ENCODE measurements at regions of chr14 and their contacts with region 1.

Region 1: DNA sequence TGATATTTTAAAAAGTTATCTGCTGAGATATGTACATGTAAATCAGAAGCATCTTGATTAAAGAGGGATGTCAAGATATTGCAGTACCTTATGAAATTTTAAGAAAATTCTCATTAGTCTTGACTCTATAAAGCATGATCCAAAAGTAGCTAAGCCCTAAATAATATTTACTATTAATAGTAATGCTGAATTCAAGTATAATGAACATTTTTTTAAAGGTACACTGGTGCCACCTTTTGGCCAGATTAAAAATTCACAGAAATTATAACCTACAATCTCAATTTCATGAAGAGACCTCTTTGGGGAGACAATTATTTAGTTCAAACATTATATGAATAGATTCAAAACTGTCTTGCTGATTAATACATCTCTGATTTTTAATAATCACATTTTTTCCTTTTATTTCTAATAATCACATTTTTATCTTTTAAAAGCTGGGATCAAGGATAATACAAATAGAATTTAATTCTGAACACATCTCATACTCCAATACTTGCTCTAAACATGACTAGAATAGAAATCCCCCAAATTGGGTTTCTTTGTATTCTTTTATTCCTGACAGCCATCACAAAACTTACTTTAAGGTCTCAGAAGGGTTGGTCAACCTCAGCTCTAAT is 13.4 kb downstream of the AKAP5 start:
- DNase-seq: no peak
- H3K4me3 ChIP-seq: no peak overlapping the region
- H3K27ac ChIP-seq: no peak overlapping the region
- H3K4me1 ChIP-seq: no peaks in the 10 kb centered on the region
- H3K27me3 ChIP-seq: no peaks in the 10 kb centered on the region
- CTCF ChIP-seq: no peak

Region 2: GRCh38 chr14:64349741-64350490 is 128.8 kb before region 1 on chr14:
- intact Hi-C with region 1: loop called (anchors 5 kb)
- DNase-seq: no peak
- H3K4me3 ChIP-seq: no peak overlapping the region
- H3K27ac ChIP-seq: no peak overlapping the region
- H3K4me1 ChIP-seq: no peaks in the 10 kb centered on the region
- H3K27me3 ChIP-seq: no peaks in the 10 kb centered on the region
- CTCF ChIP-seq: no peak

Region 3: DNA sequence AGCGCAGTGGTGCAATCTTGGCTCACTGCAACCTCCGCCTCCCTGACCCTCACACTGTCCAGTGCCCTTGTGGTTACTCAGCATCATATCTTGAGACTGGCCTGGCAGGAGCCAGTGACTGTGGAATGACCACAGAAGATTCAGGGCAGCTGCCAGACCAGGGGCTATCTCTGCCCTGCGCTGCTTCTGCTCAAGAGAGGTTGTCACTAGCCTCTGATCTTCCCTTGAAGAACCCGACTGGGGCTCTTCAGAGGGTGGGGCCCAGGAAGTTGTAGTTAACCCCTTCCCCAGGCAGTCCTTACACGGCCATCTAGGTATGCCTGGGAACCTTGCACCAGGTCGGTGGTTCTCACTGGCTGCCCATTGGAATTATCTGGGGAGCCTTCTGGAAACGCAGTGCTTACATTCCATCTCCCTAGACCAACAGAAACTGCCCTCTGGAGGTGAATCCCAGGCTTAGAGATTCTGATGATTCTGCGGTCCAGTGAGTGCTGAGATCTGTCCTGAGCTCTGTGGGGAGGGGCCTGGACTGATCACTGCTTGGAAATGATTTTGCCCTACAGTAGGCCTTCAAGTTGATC is 266.9 kb after region 1 on chr14:
- intact Hi-C with region 1: no loop called
- DNase-seq: no peak
- H3K4me3 ChIP-seq: no peak overlapping the region
- H3K27ac ChIP-seq: no peak overlapping the region
- H3K4me1 ChIP-seq: no peaks in the 10 kb centered on the region
- H3K27me3 ChIP-seq: no peaks in the 10 kb centered on the region
- CTCF ChIP-seq: no peak